WTC11 (cell line): ENCODE measurements at regions of chr1 and their contacts with region 1.

Region 1: GRCh38 chr1:151340870-151341754 is 5.9 kb downstream of the RFX5 start:
- DNase-seq: peak; percentile 47
- ATAC-seq: peak; percentile 88
- H3K4me3 Mint-ChIP-seq: no peak overlapping the region
- H3K27ac Mint-ChIP-seq: peak overlapping the region; percentile 58
- H3K4me1 Mint-ChIP-seq: peaks cover 5% of the 10 kb centered on the region
- H3K27me3 Mint-ChIP-seq: no peaks in the 10 kb centered on the region
- CTCF ChIP-seq: peak; percentile 50; the same call in 1 of the 2 replicates

Region 2: DNA sequence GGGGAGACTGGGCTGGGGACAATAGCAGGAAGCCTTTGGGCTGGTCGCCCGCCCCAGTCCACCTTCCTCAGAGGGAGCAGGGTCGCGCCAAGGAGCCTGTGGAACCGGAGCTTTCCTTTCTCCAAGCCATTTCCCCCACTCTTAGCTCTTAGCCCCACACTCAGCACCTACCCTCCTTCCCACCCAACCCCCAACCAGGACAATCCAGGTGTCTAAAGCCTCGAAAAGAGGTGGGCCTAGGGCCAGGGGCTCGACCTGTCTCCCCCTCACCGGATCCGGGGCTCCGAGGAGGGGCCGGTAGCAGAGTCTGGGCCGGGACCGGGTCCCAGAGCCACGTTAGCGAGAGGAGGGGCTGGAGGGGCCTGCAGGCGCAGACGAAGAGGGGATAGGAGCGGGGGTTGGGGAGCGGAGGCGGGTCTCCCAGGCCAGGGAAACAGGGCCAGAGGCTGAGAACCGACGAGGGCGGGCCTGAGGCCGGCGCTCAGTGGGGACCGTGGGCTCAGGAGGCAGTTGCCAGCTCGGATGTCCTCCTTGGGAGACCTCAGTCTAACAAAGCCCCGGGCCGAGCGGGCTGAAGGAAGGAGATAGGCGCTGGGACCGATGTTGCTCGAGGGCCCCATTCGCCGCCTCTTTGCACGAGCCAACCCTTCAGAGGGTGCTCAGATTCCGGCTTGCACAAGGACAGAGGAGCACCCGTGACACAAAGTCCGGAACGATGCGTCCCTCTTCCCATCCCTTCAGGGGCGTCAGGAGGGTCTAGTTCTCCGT is 195.6 kb before region 1 on chr1:
- CTCF ChIA-PET with region 1: no interaction called
- POLR2A ChIA-PET with region 1: no interaction called
- DNase-seq: peak; percentile 48
- ATAC-seq: peak; percentile 11
- H3K4me3 Mint-ChIP-seq: peak overlapping the region; percentile 93
- H3K27ac Mint-ChIP-seq: no peak overlapping the region
- H3K4me1 Mint-ChIP-seq: peaks cover 38% of the 10 kb centered on the region
- H3K27me3 Mint-ChIP-seq: peaks cover 44% of the 10 kb centered on the region
- CTCF ChIP-seq: no peak

Region 3: GRCh38 chr1:151281969-151282882 is 58.9 kb before region 1 on chr1 and contains the start of gene ZNF687:
- CTCF ChIA-PET with region 1: interaction called, 16 read pairs
- POLR2A ChIA-PET with region 1: interaction called, 4 read pairs
- DNase-seq: peak; percentile 99
- ATAC-seq: peak; percentile 95
- H3K4me3 Mint-ChIP-seq: peak within 1 kb of the TSS; percentile 96
- H3K27ac Mint-ChIP-seq: peak within 1 kb of the TSS; percentile 100
- H3K4me1 Mint-ChIP-seq: peaks cover 15% of the 10 kb centered on the region
- H3K27me3 Mint-ChIP-seq: peaks cover 4% of the 10 kb centered on the region; the same call in 1 of the 2 replicates
- CTCF ChIP-seq: no peak
- total RNA-seq, gene ZNF687: 54.1 to 56.8 TPM (median 55.1 TPM) in 3 replicates

Region 4: GRCh38 chr1:151311589-151312331 is 29.4 kb before region 1 on chr1:
- CTCF ChIA-PET with region 1: interaction called, 42 read pairs
- POLR2A ChIA-PET with region 1: interaction called, 6 read pairs
- DNase-seq: no peak
- ATAC-seq: no peak
- H3K4me3 Mint-ChIP-seq: no peak overlapping the region
- H3K27ac Mint-ChIP-seq: no peak overlapping the region
- H3K4me1 Mint-ChIP-seq: peaks cover 18% of the 10 kb centered on the region
- H3K27me3 Mint-ChIP-seq: no peaks in the 10 kb centered on the region
- CTCF ChIP-seq: no peak

Region 5: DNA sequence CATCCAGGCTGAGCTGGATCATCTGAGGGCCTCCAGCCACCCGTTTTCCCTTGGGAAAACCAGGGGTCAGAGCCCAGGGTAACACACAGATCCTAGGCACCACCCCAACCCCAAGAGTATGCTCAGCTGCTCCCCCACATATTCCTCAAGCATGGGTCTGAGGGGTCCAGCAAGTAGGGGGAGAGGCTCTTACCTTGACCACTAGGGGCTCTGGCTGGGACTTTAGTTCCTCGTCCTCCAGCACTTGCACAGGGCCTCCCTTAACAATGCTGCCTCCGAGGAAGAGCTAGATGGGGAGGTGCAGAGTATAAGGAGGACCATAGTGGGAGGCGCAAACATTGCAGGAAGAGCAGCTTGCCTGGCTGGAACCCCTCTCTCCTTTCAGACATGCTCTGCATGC is 23.9 kb after region 1 on chr1:
- CTCF ChIA-PET with region 1: interaction called, 11 read pairs
- POLR2A ChIA-PET with region 1: no interaction called
- DNase-seq: no peak
- ATAC-seq: peak; percentile 68
- H3K4me3 Mint-ChIP-seq: no peak overlapping the region
- H3K27ac Mint-ChIP-seq: no peak overlapping the region
- H3K4me1 Mint-ChIP-seq: no peaks in the 10 kb centered on the region
- H3K27me3 Mint-ChIP-seq: peaks cover 9% of the 10 kb centered on the region
- CTCF ChIP-seq: no peak

Region 6: DNA sequence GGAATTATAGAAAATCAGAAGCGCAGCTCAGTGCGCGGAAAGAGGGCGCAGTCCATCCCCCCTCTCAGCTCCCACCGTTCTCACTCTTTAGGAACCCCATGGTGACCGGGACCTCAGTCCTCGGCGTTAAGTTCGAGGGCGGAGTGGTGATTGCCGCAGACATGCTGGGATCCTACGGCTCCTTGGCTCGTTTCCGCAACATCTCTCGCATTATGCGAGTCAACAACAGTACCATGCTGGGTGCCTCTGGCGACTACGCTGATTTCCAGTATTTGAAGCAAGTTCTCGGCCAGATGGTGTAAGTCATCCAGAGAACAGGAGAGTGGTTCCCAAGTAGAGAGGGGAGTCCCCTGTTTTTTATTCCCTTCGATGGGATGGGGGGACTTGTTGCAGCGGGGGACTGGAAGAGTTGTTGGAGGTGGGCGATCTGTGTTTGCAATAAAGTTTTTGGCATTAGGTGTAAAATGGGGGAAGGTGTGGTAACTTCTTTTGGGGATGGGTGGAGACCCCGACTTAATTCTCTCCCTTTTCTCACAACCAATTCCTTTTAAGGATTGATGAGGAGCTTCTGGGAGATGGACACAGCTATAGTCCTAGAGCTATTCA is 58.9 kb after region 1 on chr1:
- CTCF ChIA-PET with region 1: interaction called, 10 read pairs
- POLR2A ChIA-PET with region 1: interaction called, 5 read pairs
- DNase-seq: peak; percentile 24
- ATAC-seq: peak; percentile 38
- H3K4me3 Mint-ChIP-seq: peak overlapping the region; percentile 97
- H3K27ac Mint-ChIP-seq: peak overlapping the region; percentile 100
- H3K4me1 Mint-ChIP-seq: peaks cover 11% of the 10 kb centered on the region
- H3K27me3 Mint-ChIP-seq: no peaks in the 10 kb centered on the region
- CTCF ChIP-seq: no peak